OCI-LY7 (cell line): ENCODE measurements at regions of chr1 and their contacts with region 1.

Region 1: DNA sequence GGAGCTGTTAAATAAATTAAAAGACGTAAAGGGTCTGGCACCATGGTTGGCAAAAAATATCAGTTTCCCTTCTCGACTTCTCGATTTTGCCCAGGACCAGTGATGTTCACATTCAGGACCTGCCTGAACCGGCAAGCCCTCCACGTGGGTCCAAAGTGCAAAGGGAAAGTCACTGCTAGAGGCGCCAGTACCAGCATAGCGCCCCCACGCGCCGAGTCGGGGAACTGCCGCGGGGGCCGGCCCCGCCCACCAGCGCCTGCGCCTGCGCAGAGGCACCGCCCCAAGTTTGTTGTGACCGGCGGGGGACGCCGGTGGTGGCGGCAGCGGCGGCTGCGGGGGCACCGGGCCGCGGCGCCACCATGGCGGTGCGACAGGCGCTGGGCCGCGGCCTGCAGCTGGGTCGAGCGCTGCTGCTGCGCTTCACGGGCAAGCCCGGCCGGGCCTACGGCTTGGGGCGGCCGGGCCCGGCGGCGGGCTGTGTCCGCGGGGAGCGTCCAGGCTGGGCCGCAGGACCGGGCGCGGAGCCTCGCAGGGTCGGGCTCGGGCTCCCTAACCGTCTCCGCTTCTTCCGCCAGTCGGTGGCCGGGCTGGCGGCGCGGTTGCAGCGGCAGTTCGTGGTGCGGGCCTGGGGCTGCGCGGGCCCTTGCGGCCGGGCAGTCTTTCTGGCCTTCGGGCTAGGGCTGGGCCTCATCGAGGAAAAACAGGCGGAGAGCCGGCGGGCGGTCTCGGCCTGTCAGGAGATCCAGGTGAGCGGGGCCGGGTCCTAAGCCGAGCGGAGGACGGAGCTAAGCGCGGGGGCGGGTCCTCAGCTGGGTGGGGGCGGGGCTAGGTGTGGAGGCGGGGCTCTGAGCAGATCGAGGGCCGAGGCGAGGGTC is at the start of gene PINK1:
- DNase-seq: peak; percentile 82
- H3K4me3 ChIP-seq: peak within 1 kb of the TSS; percentile 91
- H3K27ac ChIP-seq: peak within 1 kb of the TSS; percentile 45
- H3K4me1 ChIP-seq: peaks cover 14% of the 10 kb centered on the region
- CTCF ChIP-seq: peak; percentile 97
- total RNA-seq, gene PINK1: 8.2 and 8.9 TPM in 2 replicates

Region 2: GRCh38 chr1:20212685-20213331 is 420.6 kb before region 1 on chr1:
- CTCF ChIA-PET with region 1: no interaction called
- POLR2A ChIA-PET with region 1: no interaction called
- intact Hi-C with region 1: loop called (anchors 10 kb)
- DNase-seq: peak; percentile 94
- H3K4me3 ChIP-seq: peak overlapping the region; percentile 45
- H3K27ac ChIP-seq: peak overlapping the region; percentile 69
- H3K4me1 ChIP-seq: peaks cover 39% of the 10 kb centered on the region
- CTCF ChIP-seq: peak; percentile 97

Region 3: DNA sequence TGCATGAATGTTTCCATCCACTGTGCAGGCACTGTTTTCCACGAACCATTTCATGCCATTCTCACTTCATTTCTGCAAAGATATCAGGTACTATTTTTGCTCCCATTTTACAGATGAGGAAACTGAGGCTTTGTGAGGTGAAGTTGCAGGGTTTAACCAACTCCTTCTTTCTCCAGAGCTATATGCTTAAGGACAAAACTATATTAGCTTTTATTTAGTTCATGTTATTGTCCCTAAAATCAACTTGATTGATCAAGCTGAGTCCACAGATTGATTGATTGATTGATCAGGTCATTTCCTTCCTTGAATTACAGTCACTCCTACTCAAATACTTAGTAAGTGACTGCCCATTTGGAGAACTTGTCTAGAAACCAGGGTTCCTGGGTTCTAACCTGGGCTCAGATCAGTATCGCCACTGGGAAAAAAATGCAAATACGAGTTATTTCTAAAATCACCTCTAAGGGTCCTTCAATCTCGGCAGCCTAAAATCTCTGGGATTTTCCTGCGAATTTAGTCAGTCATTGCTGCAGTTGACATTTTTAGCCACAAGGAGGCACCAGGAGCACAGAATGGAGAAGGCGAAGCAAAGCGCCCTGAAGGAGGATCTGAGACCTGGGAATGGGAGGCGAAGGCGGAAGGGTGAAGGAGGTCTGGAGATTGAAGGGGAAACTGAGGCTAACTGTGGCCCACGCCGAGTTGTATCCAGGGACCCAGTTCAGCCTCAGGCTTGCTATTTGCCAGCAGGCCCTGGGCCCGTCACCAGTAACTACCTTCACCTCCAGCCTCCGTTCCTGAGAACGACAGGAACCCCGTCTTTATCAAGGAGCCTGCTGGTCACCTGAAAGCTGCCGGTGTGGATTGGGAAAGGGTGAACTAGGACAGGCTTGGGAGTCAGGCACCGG is 111.2 kb before region 1 on chr1:
- CTCF ChIA-PET with region 1: no interaction called
- POLR2A ChIA-PET with region 1: interaction called, 6 read pairs
- intact Hi-C with region 1: loop called (anchors 1 kb)
- DNase-seq: peak; percentile 69
- H3K4me3 ChIP-seq: no peak overlapping the region
- H3K27ac ChIP-seq: no peak overlapping the region
- H3K4me1 ChIP-seq: no peaks in the 10 kb centered on the region
- CTCF ChIP-seq: peak; percentile 95

Region 4: GRCh38 chr1:20540281-20540680 is 93.1 kb before region 1 on chr1:
- CTCF ChIA-PET with region 1: no interaction called
- POLR2A ChIA-PET with region 1: no interaction called
- intact Hi-C with region 1: loop called (anchors 5 kb)
- DNase-seq: no peak
- H3K4me3 ChIP-seq: no peak overlapping the region
- H3K27ac ChIP-seq: no peak overlapping the region
- H3K4me1 ChIP-seq: no peaks in the 10 kb centered on the region
- CTCF ChIP-seq: no peak

Region 5: DNA sequence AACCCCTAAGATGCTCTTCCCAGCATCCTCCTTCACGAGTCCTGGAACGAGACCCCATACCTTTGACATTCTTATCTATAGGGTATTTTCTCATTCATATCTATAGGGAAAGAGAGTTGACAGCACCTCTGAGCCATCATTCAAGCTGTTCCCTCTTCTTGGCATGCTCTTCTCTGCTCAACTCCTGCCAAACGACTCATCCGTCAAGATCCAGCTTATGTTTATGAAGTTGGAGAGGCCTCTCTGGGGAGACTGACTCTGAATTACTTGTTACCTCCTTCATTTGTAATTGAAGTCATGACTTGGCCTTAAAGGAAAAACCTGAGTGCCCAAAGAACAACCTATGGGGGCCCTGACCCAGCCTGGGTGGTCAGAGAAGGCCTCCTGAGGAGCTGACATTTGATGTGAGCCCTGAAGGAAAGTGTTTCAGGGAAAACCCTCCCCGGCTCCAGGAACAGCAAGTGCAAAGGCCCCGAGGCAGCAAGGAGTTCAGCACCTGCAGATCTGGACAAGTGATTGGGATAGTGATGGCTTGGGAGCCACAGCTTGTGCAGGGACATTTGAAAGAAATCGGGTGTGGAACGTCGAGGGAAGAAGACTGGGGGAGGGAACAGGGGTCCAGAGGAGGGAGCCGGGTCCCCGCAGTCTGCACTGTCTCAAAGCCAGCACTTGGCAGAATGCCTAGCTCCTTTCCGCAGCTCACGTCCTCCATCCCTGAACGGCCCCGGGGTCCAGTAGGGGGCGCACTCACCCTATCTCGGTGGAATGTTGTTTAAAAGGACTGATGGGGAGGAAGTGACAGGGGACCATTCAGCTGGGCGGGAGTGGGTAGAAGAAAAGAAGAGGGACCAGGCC is 58.5 kb before region 1 on chr1:
- CTCF ChIA-PET with region 1: interaction called, 11 read pairs
- POLR2A ChIA-PET with region 1: no interaction called
- intact Hi-C with region 1: loop called (anchors 2 kb)
- DNase-seq: peak; percentile 52
- H3K4me3 ChIP-seq: no peak overlapping the region
- H3K27ac ChIP-seq: no peak overlapping the region
- H3K4me1 ChIP-seq: no peaks in the 10 kb centered on the region
- CTCF ChIP-seq: peak; percentile 81

Region 6: DNA sequence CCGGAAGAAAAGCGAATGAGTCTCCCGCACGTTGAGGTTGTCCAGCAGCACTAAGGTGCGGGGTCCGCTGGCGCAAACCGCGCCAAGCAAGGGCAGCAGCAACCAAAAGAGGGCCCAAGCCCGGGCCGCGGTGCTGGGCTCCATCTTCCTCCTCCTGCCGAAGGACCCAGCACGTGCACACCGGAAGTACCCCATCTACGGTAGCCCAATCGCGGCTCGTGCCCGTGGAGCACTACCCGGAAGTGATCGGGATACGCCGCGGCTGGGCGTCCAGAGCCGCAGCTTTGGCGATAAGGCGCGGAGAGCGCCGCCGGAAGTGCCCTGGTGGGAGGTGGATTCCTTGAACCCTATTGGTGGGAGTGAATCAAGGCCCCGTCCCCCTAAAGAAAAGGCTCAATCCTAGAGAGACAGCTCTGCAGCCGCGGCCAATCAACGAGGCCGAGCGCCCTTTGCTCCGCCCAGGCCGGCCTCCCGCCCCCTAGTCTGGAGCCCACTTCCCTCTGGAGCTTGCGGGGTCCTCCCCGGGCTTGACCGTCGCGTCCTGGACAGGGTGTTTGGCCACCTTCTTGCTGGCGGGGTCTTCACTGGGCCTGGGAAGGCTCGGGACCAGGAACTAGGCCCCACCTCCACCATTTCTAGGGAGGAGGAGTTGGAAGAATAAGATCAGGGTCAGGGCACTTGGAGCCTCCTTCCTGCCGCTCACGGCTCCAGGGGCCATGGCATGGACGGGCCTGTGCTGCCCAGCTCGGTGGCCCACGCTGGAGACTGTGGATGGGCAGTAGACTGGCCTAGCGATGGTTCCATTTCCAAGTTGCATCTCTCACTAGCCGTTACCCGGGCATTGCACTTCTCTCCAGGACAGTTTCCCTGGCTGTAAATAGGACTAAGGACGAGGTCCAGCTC is 28.0 kb after region 1 on chr1 and contains the start of gene DDOST:
- CTCF ChIA-PET with region 1: interaction called, 5 read pairs
- POLR2A ChIA-PET with region 1: interaction called, 10 read pairs
- intact Hi-C with region 1: loop called (anchors 2 kb)
- DNase-seq: peak; percentile 99
- H3K4me3 ChIP-seq: peak within 1 kb of the TSS; percentile 94
- H3K27ac ChIP-seq: peak within 1 kb of the TSS; percentile 37
- H3K4me1 ChIP-seq: peaks cover 32% of the 10 kb centered on the region
- CTCF ChIP-seq: peak; percentile 62
- total RNA-seq, gene DDOST: 95.1 and 111 TPM in 2 replicates